ENCODE measurements at regions of chr17 and their contacts with region 1.

Region 1: GRCh38 chr17:49707608-49708514 is at the start of gene SLC35B1:
- DNase-seq: peak; percentile 100
- ATAC-seq: peak; percentile 91
- H3K4me3 ChIP-seq: peak within 1 kb of the TSS; percentile 86
- H3K27ac ChIP-seq: peak within 1 kb of the TSS; percentile 80
- H3K4me1 ChIP-seq: peaks cover 17% of the 10 kb centered on the region
- H3K27me3 ChIP-seq: no peaks in the 10 kb centered on the region
- CTCF ChIP-seq: peak; percentile 98
- total RNA-seq, gene SLC35B1: 199 and 211 TPM in 2 replicates

Region 2: GRCh38 chr17:49723423-49723822 is 15.6 kb after region 1 on chr17:
- CTCF ChIA-PET with region 1: no interaction called
- POLR2A ChIA-PET with region 1: no interaction called
- intact Hi-C with region 1: no loop called
- DNase-seq: no peak
- ATAC-seq: no peak
- H3K4me3 ChIP-seq: no peak overlapping the region
- H3K27ac ChIP-seq: no peak overlapping the region
- H3K4me1 ChIP-seq: no peaks in the 10 kb centered on the region
- H3K27me3 ChIP-seq: no peaks in the 10 kb centered on the region
- CTCF ChIP-seq: no peak

Region 3: DNA sequence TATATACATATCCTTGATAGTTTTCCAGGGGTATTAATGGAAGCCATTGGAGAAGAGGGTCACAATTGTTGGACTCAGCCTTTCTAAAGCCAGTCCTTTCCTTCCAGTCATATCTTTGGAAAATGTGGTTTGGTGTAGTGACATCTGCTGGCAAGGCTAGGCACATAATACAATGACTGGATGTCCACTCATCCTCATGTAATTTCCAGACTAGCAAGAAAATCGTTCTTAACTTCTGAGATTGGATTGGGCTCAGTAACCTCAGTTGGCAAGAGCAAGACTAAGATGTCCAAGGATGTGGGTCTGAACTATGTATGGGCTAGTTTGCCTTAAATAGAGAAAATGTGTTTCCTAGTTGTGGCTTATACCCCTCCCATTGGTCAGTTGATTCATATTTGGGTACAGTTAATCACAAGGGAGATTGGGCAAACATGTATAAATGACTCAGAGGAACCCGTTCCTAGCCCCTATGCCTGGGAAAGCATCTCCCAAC is 71.9 kb after region 1 on chr17:
- CTCF ChIA-PET with region 1: interaction called, 3 read pairs
- POLR2A ChIA-PET with region 1: no interaction called
- intact Hi-C with region 1: loop called (anchors 1 kb)
- DNase-seq: peak; percentile 83
- ATAC-seq: peak; percentile 95
- H3K4me3 ChIP-seq: no peak overlapping the region
- H3K27ac ChIP-seq: peak overlapping the region; percentile 13
- H3K4me1 ChIP-seq: peaks cover 13% of the 10 kb centered on the region
- H3K27me3 ChIP-seq: no peaks in the 10 kb centered on the region
- CTCF ChIP-seq: peak; percentile 91

Region 4: GRCh38 chr17:49788478-49789242 is 80.8 kb after region 1 on chr17 and contains the start of gene KAT7:
- CTCF ChIA-PET with region 1: interaction called, 9 read pairs
- POLR2A ChIA-PET with region 1: interaction called, 3 read pairs
- intact Hi-C with region 1: loop called (anchors 1 kb)
- DNase-seq: peak; percentile 100
- ATAC-seq: peak; percentile 92
- H3K4me3 ChIP-seq: peak within 1 kb of the TSS; percentile 84
- H3K27ac ChIP-seq: peak within 1 kb of the TSS; percentile 76
- H3K4me1 ChIP-seq: peaks cover 16% of the 10 kb centered on the region
- H3K27me3 ChIP-seq: no peaks in the 10 kb centered on the region
- CTCF ChIP-seq: no peak
- total RNA-seq, gene KAT7: 39.1 and 45.8 TPM in 2 replicates

Region 5: DNA sequence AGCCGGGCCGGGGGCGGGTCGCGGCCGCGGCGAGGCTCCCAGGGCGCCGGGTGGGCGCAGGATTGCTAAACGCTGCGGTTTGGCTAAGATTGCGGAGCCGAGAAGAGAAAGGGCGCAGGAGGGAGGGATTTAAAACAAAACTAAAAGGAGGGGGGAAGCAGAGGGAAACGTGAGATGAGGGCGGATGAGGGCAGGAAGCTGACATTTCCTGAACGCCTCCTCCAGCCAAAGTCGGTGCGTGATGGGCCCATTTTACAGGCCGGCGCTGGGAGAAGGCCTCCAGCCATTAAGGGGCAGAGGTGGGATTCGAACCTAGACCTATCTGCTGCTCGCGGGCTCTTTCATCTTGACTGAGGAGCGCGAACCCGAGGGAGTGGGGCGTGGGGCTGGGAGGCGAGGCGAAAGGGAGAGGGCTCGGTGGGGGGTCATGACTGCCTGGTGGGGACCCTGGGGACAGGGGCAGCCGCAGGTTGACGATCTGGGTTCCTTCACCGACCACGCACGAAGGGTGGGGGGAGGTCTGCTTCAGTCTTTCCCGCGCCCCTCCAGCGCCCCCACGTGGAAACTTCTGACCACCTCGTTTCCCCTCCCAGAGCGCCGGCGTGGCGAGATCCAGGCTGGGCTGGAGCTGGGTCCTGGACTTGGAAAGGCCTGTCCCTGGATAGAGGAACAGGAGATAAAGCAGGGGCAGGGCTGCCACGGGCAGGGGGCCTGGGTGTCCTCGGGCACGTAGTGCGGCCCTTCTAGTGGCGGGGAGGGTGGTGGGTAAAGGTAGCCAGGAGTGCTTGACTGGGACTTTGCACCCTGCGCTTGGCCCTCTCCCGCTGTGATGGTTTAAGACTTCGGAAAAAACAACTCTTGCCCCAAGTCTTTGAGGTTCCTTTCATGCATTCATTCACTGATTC is 143.8 kb after region 1 on chr17:
- CTCF ChIA-PET with region 1: no interaction called
- POLR2A ChIA-PET with region 1: no interaction called
- intact Hi-C with region 1: loop called (anchors 1 kb)
- DNase-seq: peak; percentile 74
- ATAC-seq: peak; percentile 65
- H3K4me3 ChIP-seq: peak overlapping the region; percentile 66
- H3K27ac ChIP-seq: no peak overlapping the region
- H3K4me1 ChIP-seq: no peaks in the 10 kb centered on the region; the same call in 1 of the 2 replicates
- H3K27me3 ChIP-seq: peaks cover 3% of the 10 kb centered on the region; the same call in 1 of the 2 replicates
- CTCF ChIP-seq: peak; percentile 90

Measured in PC-3 (cell line).